Dorsolateral prefrontal cortex (tissue), 120 donors: ENCODE measurements at regions of chr1 and their contacts with region 1.

Region 1: GRCh38 chr1:9629445-9630201 is 21.9 kb upstream of the PIK3CD start:
- DNase-seq: no peak
- H3K4me3 ChIP-seq: peak overlapping the region in 1 of 59 donors; percentile 9
- H3K27ac ChIP-seq: peak overlapping the region in 8 of 59 donors; percentile 4 to 38 (median 16)
- H3K27me3 ChIP-seq: no peaks in the 10 kb centered on the region
- CTCF ChIP-seq: no peak

Region 2: GRCh38 chr1:9715536-9716226 is 86.1 kb after region 1 on chr1:
- intact Hi-C with region 1: loop called in 1 of 2 experiments (anchors 1 kb)
- DNase-seq: no peak
- H3K4me3 ChIP-seq: no peak overlapping the region
- H3K27ac ChIP-seq: no peak overlapping the region
- H3K27me3 ChIP-seq: no peaks in the 10 kb centered on the region
- CTCF ChIP-seq: no peak